ENCODE measurements at regions of chrX and their contacts with region 1.

Region 1: DNA sequence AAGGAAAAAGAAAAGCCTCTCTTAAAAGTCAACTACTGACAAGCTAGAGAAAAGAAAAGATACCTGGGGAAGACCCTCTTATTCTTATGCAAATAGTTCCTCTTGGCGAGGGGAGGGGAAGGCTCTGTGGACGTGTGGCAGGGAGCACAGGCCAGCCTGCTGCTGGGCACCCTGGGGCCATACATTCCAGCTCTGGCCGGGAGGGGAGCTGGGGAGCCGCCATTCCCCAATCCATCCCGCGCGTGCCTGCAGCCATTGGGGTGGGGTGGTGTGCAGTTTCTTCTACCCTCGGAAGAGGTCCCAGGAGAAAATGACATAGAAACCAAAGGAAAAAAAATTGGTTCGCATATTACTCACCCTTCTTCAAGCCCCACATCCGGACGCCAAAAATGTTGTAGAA is 1496.4 kb downstream of the RPA4 start:
- DNase-seq: no peak
- ATAC-seq: no peak

Region 2: DNA sequence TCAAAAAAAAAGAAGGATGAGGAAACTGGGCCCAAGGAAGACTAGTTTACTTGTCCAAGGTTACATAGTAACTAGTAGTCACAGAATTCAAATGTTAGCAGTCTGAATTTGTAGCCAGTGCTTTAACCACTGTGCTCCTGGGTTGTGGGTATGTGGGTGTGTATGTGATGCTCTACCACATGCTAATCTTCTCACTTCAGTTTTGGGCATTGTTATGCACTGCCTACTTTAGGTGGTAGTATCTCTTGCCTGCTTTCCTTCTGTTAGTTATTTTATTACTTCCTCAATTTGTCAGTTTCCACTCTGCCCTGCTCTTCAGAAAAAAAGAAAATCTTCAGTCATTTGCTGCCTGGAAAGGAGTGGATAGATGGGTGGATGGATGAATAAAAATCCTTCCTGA is 1277.2 kb before region 1 on chrX:
- intact Hi-C with region 1: loop called (anchors 5 kb)
- DNase-seq: no peak
- ATAC-seq: no peak

Region 3: DNA sequence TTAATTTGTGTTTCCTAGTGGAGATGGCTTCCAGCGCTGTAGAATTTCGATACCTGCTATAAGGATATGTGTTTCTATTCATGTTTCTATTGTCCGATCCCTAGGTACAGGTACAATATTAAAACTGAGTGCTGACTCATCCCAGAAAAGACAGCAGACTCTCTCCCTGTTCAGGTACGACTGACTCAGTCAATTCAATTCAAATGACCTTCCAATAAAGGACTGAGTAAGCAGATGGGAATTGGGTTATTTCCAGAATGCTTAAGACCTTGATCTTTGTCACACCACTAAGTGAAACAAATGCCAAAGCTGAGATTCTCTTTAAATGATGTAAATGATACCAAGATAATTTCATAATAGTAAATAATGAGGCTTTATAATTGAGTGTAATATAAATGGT is 100.5 kb after region 1 on chrX:
- intact Hi-C with region 1: no loop called
- DNase-seq: no peak
- ATAC-seq: no peak

Measured in sciatic nerve (tissue), 2 donors.